Pancreas (tissue), 10 donors: ENCODE measurements at regions of chr1 and their contacts with region 1.

Region 1: DNA sequence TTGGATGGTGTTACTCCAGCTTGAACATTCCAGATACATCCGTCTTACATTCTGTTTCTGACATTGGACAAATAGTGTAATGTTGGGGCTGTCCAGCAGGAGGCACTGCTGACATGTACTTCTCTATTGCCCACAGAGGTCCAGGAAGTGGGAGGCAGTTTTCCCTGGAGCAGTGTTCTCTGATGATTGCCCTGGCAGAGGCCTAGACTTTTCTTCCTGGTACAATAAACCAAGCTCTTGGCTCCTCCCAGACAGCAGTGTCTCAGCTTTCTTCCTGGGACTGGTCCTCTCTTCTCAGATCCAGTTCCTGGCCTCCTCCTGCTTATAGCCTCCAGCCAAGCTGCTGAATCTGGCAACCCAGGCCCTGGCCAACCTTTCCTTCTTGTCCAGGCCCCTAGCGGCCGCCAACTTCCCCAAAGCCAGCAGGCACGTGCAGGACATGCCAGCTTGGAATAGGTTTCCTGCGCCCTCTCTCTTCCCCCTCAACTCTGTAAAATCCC is 14.9 kb upstream of the IFNLR1 start:
- DNase-seq: peak in 5 of 6 donors; percentile 77 to 85 (median 81)
- ATAC-seq: peak; percentile 85 to 93 (median 90)
- H3K4me3 ChIP-seq: no peak overlapping the region
- H3K27ac ChIP-seq: peak overlapping the region in 2 of 4 donors; percentile 33 to 42
- H3K4me1 ChIP-seq: peaks cover 0 to 6% (median 0%) of the 10 kb centered on the region in 3 donors
- H3K27me3 ChIP-seq: no peaks in the 10 kb centered on the region
- CTCF ChIP-seq: peak; percentile 45 to 77 (median 62)

Region 2: GRCh38 chr1:24391882-24392603 is 190.1 kb after region 1 on chr1:
- intact Hi-C with region 1: loop called in 2 of 3 experiments (anchors 2 to 5 kb)
- DNase-seq: peak in 5 of 6 donors; percentile 20 to 73 (median 55)
- ATAC-seq: peak; percentile 82 to 94 (median 88)
- H3K4me3 ChIP-seq: peak overlapping the region in 1 of 4 donors; percentile 10
- H3K27ac ChIP-seq: peak overlapping the region in 3 of 4 donors; percentile 6 to 51 (median 17)
- H3K4me1 ChIP-seq: peaks cover 0 to 4% (median 0%) of the 10 kb centered on the region in 3 donors
- H3K27me3 ChIP-seq: no peaks in the 10 kb centered on the region
- CTCF ChIP-seq: peak; percentile 44 to 74 (median 53)

Region 3: DNA sequence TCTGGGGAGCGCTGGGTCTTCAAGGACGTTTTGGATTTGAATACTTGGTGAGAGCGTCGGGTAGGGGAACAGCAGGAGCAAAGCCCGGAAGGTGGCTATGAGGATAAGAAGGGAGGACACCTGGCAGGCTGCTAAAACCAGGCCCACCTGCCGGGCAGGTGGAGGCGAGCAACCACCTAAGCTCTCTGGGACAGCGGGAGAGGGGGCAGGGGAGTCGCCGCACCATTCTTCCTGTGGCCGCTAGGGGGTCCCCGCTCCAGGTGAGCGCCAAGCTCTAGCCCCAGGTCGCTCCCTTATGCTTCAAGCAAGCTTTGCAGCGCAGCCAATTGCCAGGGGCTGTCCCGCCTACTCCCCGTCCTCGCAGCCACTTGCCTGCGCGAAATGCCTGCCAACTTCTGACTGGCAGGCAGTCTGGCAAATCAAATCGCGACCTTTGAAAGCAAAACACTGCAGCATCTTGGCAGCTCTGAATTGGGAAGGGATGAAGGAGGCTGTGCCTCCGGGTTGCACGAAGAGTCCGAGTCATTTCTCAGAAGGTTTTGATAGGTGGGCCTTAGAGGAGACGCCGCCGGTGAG is 213.4 kb after region 1 on chr1 and contains the start of gene NIPAL3:
- intact Hi-C with region 1: no loop called
- DNase-seq: peak; percentile 93 to 99 (median 99)
- ATAC-seq: peak; percentile 85 to 93 (median 89)
- H3K4me3 ChIP-seq: peak within 1 kb of the TSS; percentile 44 to 77 (median 54)
- H3K27ac ChIP-seq: peak within 1 kb of the TSS; percentile 64 to 84 (median 74)
- H3K4me1 ChIP-seq: peaks cover 18 to 41% (median 36%) of the 10 kb centered on the region in 3 donors
- H3K27me3 ChIP-seq: no peaks in the 10 kb centered on the region
- CTCF ChIP-seq: peak; percentile 85 to 93 (median 92)
- total RNA-seq, gene NIPAL3: 16.1 to 25.4 (median 19.3) TPM

Region 4: DNA sequence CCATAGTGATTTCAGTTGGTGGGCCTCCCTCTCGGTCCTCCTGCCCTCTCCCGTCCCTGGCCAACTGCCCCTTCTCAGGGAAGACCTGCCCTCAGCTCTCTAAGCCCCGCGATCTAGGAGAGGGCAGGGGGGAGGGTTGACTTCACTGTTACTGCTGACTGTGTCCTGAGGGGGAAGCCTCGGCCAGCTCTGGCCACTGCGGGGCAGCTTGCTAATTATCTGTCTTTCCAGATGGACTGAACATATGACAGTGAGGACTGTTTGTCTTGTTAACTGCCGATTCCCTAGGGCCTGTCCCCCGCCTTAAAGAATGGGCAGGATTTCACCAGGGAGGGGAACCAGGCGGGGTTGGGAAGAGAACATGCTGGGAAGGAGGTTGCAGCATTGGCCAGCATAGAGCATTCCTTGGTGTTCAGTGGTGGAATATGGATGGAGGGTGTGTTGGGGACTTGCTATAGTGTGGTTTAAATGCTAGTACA is 236.5 kb after region 1 on chr1:
- intact Hi-C with region 1: no loop called
- DNase-seq: no peak
- ATAC-seq: peak in 2 of 4 donors; percentile 22 to 44
- H3K4me3 ChIP-seq: no peak overlapping the region
- H3K27ac ChIP-seq: no peak overlapping the region
- H3K4me1 ChIP-seq: peaks cover 0 to 3% (median 0%) of the 10 kb centered on the region in 3 donors
- H3K27me3 ChIP-seq: no peaks in the 10 kb centered on the region
- CTCF ChIP-seq: no peak

Region 5: GRCh38 chr1:24526940-24527542 is 325.1 kb after region 1 on chr1:
- intact Hi-C with region 1: no loop called
- DNase-seq: no peak
- ATAC-seq: peak in 3 of 4 donors; percentile 48 to 71 (median 51)
- H3K4me3 ChIP-seq: no peak overlapping the region
- H3K27ac ChIP-seq: no peak overlapping the region
- H3K4me1 ChIP-seq: no peaks in the 10 kb centered on the region
- H3K27me3 ChIP-seq: no peaks in the 10 kb centered on the region
- CTCF ChIP-seq: peak in 3 of 4 donors; percentile 31 to 38 (median 33)